GM12878 (cell line): ENCODE measurements at regions of chr2 and their contacts with region 1.

Region 1: DNA sequence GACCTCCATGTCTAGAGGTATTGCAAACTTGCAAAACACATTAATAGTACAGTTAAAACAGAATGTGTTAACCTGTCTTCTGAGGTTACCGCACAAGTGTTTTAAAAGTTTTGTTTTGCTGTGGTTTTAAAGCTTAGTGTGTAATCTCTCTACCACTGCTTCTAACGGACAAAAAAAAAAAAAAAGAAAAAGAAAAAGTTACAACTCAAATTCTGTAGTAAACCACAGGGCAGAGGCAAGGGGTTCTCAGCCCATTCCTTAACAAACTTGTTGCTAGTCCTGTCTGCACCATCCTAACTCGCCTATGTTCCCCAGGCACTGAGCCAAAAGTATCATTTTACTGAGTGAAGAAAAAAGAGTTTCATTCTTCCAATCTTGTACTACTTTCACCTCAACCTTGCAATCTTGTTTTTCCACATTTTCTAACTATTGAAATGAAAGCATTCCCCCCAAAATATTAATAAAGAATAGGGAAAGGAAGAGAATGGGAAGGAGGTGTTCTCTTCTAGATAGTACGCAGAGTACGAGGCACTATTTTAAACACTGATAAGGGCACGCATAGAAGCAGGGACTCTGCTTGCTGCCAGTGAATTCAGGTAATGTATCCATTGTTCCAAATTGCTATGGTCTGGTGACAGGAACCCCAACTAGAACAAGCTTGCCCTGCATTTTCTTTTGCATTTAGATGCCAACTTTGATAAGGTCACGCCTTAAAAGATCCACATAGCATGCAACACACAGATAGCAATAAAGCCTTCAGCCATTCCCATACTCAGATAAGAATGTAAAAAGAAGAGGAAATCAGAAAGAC is 47.1 kb downstream of the IKZF2 start:
- DNase-seq: no peak
- ATAC-seq: peak; percentile 57
- H3K4me3 ChIP-seq: 0 out of 2 replicates have a peak overlapping the region, but pooled peaks have one; percentile 3
- H3K27ac ChIP-seq: no peak overlapping the region
- H3K4me1 ChIP-seq: no peaks in the 10 kb centered on the region; the same call in 1 of the 2 replicates
- H3K27me3 ChIP-seq: no peaks in the 10 kb centered on the region
- CTCF ChIP-seq: no peak
- EP300 ChIP-seq: no peak
- POLR2A ChIP-seq: no peak
- RAD21 ChIP-seq: no peak

Region 2: GRCh38 chr2:213119061-213119856 is 15.0 kb after region 1 on chr2:
- CTCF ChIA-PET with region 1: interaction called, 4 read pairs
- POLR2A ChIA-PET with region 1: interaction called, 5 read pairs
- RAD21 ChIA-PET with region 1: interaction called, 7 read pairs
- SMC1A ChIA-PET with region 1: interaction called, 34 read pairs
- in situ Hi-C with region 1: no loop called
- intact Hi-C with region 1: no loop called
- DNase-seq: peak; percentile 59
- ATAC-seq: peak; percentile 76
- H3K4me3 ChIP-seq: peak overlapping the region; percentile 53
- H3K27ac ChIP-seq: peak overlapping the region; percentile 79
- H3K4me1 ChIP-seq: peaks cover 23% of the 10 kb centered on the region
- H3K27me3 ChIP-seq: no peaks in the 10 kb centered on the region
- CTCF ChIP-seq: no peak
- EP300 ChIP-seq: no peak
- POLR2A ChIP-seq: no peak
- RAD21 ChIP-seq: 0 out of 2 replicates have a peak, but pooled peaks have one; percentile 5

Region 3: GRCh38 chr2:213232649-213233437 is 128.5 kb after region 1 on chr2:
- CTCF ChIA-PET with region 1: no interaction called
- POLR2A ChIA-PET with region 1: no interaction called
- RAD21 ChIA-PET with region 1: no interaction called
- SMC1A ChIA-PET with region 1: no interaction called
- in situ Hi-C with region 1: no loop called
- intact Hi-C with region 1: no loop called
- DNase-seq: peak; percentile 100
- ATAC-seq: peak; percentile 72
- H3K4me3 ChIP-seq: peak overlapping the region; percentile 13; the same call in 1 of the 2 replicates
- H3K27ac ChIP-seq: peak overlapping the region; percentile 98
- H3K4me1 ChIP-seq: peaks cover 56% of the 10 kb centered on the region
- H3K27me3 ChIP-seq: no peaks in the 10 kb centered on the region
- CTCF ChIP-seq: no peak
- EP300 ChIP-seq: peak; percentile 70 to 93; a peak in 3 of 4 replicates
- POLR2A ChIP-seq: peak; percentile 60; the same call in 1 of the 2 replicates
- RAD21 ChIP-seq: peak; percentile 39; the same call in 1 of the 2 replicates

Region 4: DNA sequence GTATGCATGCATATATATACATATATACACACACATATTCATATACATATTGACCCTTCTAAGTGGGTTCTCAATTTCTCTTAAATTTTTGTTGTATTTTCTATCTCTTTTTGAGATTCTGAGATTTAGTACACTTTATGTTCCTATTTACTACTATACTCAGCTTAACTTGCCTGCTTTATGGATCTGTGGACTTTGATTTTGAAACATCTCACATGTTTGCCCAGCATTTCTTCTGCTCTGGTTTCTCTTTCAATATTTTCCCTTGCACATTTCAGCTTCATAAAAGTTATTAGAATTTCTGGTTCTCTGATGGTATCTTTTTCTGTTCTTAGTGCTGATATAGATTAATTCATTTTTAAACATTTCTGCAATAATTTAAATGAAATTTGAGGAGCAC is 560.5 kb after region 1 on chr2:
- CTCF ChIA-PET with region 1: no interaction called
- POLR2A ChIA-PET with region 1: no interaction called
- RAD21 ChIA-PET with region 1: no interaction called
- SMC1A ChIA-PET with region 1: no interaction called
- in situ Hi-C with region 1: no loop called
- intact Hi-C with region 1: no loop called
- DNase-seq: no peak
- ATAC-seq: no peak
- H3K4me3 ChIP-seq: no peak overlapping the region
- H3K27ac ChIP-seq: no peak overlapping the region
- H3K4me1 ChIP-seq: no peaks in the 10 kb centered on the region
- H3K27me3 ChIP-seq: no peaks in the 10 kb centered on the region
- CTCF ChIP-seq: no peak
- EP300 ChIP-seq: no peak
- POLR2A ChIP-seq: no peak
- RAD21 ChIP-seq: no peak

Region 5: GRCh38 chr2:214069265-214069664 is 965.0 kb after region 1 on chr2:
- CTCF ChIA-PET with region 1: no interaction called
- POLR2A ChIA-PET with region 1: no interaction called
- RAD21 ChIA-PET with region 1: no interaction called
- SMC1A ChIA-PET with region 1: no interaction called
- in situ Hi-C with region 1: no loop called
- intact Hi-C with region 1: no loop called
- DNase-seq: no peak
- ATAC-seq: peak; percentile 98
- H3K4me3 ChIP-seq: no peak overlapping the region
- H3K27ac ChIP-seq: no peak overlapping the region
- H3K4me1 ChIP-seq: no peaks in the 10 kb centered on the region
- H3K27me3 ChIP-seq: no peaks in the 10 kb centered on the region
- CTCF ChIP-seq: no peak
- EP300 ChIP-seq: no peak
- POLR2A ChIP-seq: no peak
- RAD21 ChIP-seq: no peak